Left ventricle myocardium superior (tissue), 1 donor: ENCODE measurements at regions of chr2 and their contacts with region 1.

Region 1: DNA sequence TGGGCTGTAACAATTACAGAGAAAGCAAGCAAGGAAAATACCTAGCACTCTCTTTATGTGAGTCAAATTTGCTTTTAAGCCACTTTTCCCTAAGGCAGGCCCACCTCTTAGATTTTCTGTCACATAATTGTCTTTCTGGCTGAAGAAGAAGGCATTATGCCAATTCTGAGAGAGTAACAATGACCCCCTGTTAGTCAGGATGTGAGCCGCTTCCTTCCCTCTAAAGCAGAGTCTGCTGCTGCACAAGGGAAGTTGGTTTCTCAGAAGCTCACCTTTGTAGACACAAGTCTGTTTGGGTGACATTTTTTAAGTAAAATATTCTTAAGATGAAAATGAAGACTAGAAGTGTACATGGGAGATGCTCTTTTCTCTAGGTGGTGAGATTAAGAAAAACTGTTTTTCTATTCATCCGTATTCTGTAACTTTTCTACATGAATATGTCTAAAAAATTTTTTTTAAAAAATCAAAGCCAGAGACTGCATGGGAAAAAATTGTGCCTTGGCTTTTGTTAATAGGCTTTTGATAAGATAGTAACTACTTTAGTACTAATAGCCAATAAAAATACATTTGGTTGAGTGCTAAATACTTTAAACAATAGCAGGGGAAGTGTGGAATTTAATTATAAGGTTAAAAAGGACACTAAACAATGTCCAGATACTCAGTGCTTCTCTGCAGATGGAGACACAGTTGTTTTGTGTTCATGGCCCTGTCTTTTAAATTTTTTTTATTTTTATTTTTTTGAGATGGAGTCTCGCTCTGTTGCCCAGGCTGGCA is 33.4 kb upstream of the VPS54 start:
- DNase-seq: no peak
- ATAC-seq: peak; percentile 56

Region 2: GRCh38 chr2:64186699-64187605 is 134.3 kb after region 1 on chr2:
- intact Hi-C with region 1: no loop called
- DNase-seq: no peak
- ATAC-seq: peak; percentile 49

Region 3: DNA sequence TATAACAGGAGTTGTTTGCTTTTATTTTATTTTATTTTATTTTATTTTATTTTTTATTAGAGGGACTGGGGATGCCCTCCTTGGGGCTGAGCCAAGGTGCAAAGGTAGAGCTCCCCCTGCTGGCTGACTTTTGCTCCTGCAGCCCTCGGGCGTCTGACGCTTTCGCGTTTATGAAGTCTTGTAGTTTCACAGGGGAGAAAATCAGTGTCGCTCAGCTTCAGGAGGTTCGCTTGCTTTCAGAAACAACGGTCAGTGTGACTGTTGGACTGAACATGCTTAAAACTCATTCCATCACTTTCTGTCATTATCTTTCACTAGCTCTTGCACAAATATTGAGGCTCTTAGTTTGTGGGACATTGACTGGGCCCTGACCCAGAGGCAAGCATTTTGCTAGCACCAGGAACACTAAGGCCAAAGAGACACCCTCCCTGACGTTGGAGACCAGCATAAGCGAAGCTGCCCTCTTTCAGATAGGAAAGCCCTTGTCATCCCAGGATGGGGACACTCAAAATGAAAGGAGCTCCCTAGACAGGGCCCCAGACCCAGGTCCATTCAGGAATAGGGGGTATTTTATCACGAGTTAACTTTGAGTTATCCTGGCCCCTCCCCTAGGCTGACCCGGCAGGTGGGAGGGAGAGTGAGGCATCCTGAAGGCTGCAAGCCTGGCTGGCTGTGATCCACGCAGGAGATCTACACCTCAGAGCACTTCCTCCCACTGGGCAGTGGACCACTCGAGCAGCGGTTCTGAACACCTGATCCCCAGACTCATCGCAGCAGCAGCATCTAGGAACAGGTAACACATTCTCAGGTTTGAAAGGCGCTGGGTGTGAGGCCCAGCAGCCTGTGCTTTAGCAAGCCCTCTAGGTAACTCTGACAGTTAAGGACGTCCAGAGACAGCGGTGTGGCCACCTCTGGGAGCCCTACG is 435.7 kb after region 1 on chr2:
- intact Hi-C with region 1: loop called (anchors 2 kb)
- DNase-seq: peak; percentile 75
- ATAC-seq: peak; percentile 72